ENCODE measurements at regions of chr15 and their contacts with region 1.

Region 1: GRCh38 chr15:66603301-66604179 is 37.7 kb upstream of the LCTL start:
- DNase-seq: peak; percentile 74
- H3K4me3 ChIP-seq: no peak overlapping the region
- H3K27ac ChIP-seq: no peak overlapping the region
- H3K4me1 ChIP-seq: no peaks in the 10 kb centered on the region
- H3K27me3 ChIP-seq: no peaks in the 10 kb centered on the region
- CTCF ChIP-seq: peak; percentile 58 to 77 (median 59)
- POLR2A ChIP-seq: no peak

Region 2: GRCh38 chr15:66524838-66525237 is 78.7 kb before region 1 on chr15:
- intact Hi-C with region 1: no loop called
- DNase-seq: no peak
- H3K4me3 ChIP-seq: no peak overlapping the region
- H3K27ac ChIP-seq: no peak overlapping the region
- H3K4me1 ChIP-seq: no peaks in the 10 kb centered on the region
- H3K27me3 ChIP-seq: no peaks in the 10 kb centered on the region
- CTCF ChIP-seq: no peak
- POLR2A ChIP-seq: no peak

Region 3: GRCh38 chr15:66774001-66774814 is 170.7 kb after region 1 on chr15:
- intact Hi-C with region 1: loop called (anchors 5 kb)
- DNase-seq: peak; percentile 86
- H3K4me3 ChIP-seq: no peak overlapping the region
- H3K27ac ChIP-seq: peak overlapping the region; percentile 17 to 39
- H3K4me1 ChIP-seq: peaks cover 32% of the 10 kb centered on the region
- H3K27me3 ChIP-seq: no peaks in the 10 kb centered on the region
- CTCF ChIP-seq: peak; percentile 95 to 98 (median 97)
- POLR2A ChIP-seq: no peak